Activated CD4-positive, alpha-beta T cell treated with anti-CD3 and anti-CD28 coated beads for 36 hours (primary cell): ENCODE measurements at regions of chr6 and their contacts with region 1.

Region 1: GRCh38 chr6:108052706-108053105 is 21.8 kb downstream of the OSTM1 start:
- DNase-seq: no peak
- ATAC-seq: no peak
- H3K4me3 Mint-ChIP-seq: no peak overlapping the region
- H3K27ac Mint-ChIP-seq: no peak overlapping the region
- H3K4me1 Mint-ChIP-seq: no peaks in the 10 kb centered on the region
- H3K27me3 Mint-ChIP-seq: no peaks in the 10 kb centered on the region

Region 2: GRCh38 chr6:107132330-107132954 is 920.3 kb before region 1 on chr6:
- CTCF ChIA-PET with region 1: no interaction called
- POLR2A ChIA-PET with region 1: no interaction called
- intact Hi-C with region 1: loop called in 1 of 2 experiments (anchors 2 kb)
- DNase-seq: peak; percentile 50
- ATAC-seq: no peak
- H3K4me3 Mint-ChIP-seq: no peak overlapping the region
- H3K27ac Mint-ChIP-seq: no peak overlapping the region
- H3K4me1 Mint-ChIP-seq: no peaks in the 10 kb centered on the region
- H3K27me3 Mint-ChIP-seq: no peaks in the 10 kb centered on the region

Region 3: DNA sequence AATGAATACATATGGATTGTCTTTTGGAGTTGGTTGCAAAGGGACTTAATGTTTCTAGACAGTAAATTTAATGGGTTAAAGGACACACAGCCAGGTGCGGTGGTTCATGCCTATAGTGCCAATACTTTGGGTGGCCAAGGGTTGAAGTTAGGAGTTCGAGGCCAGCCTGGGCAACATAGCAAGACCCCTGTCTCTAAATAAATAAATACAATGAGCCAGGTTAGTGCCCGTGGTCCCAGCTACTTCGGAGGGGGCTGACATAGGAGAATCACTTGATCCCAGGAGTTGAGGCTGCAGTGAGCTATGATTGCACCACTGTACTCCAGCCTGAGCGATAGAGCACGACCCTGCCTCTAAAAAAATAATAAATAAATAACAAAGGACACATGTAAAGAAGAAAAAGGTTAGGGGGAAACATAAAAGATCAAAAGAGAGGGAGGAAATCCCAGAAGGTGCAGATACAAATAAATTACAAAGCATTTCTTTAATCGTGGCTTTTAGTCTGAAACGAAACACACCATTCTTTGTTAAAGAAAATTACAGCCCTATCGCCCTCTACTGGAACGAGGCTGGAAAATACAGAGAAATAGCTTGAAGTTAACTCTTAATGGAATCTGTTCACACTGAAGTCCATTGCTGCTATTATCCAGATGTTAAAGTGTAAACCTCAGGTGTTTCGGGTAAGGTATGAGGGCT is 186.0 kb before region 1 on chr6:
- CTCF ChIA-PET with region 1: interaction called, 5 read pairs
- POLR2A ChIA-PET with region 1: no interaction called
- intact Hi-C with region 1: loop called (anchors 2 to 5 kb)
- DNase-seq: peak; percentile 38
- ATAC-seq: peak; percentile 43
- H3K4me3 Mint-ChIP-seq: no peak overlapping the region
- H3K27ac Mint-ChIP-seq: no peak overlapping the region
- H3K4me1 Mint-ChIP-seq: peaks cover 30% of the 10 kb centered on the region
- H3K27me3 Mint-ChIP-seq: no peaks in the 10 kb centered on the region

Region 4: GRCh38 chr6:107982486-107982885 is 70.2 kb before region 1 on chr6:
- CTCF ChIA-PET with region 1: interaction called, 7 read pairs
- POLR2A ChIA-PET with region 1: no interaction called
- intact Hi-C with region 1: loop called (anchors 1 to 5 kb)
- DNase-seq: no peak
- ATAC-seq: no peak
- H3K4me3 Mint-ChIP-seq: no peak overlapping the region
- H3K27ac Mint-ChIP-seq: no peak overlapping the region
- H3K4me1 Mint-ChIP-seq: no peaks in the 10 kb centered on the region
- H3K27me3 Mint-ChIP-seq: no peaks in the 10 kb centered on the region

Region 5: DNA sequence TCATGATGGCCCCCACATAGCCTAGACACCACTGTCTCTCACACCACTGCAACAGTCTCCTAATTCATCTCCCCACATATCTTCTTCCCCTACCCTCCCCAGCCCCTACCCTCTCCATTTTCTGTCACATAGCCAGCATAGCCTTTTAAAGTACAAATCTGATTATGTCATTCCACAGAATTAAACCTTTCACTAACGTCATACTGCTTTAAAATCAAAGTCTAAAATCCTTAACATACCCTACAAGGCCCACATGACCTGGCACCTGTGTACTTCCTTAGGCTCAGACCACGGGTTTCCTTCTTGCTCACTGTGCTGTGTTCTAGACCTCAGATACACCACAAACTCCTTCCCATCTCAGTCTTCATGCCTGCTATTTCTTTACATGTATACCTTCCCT is 15.9 kb after region 1 on chr6:
- CTCF ChIA-PET with region 1: interaction called, 11 read pairs
- POLR2A ChIA-PET with region 1: no interaction called
- intact Hi-C with region 1: no loop called
- DNase-seq: peak; percentile 68
- ATAC-seq: peak; percentile 95
- H3K4me3 Mint-ChIP-seq: no peak overlapping the region
- H3K27ac Mint-ChIP-seq: no peak overlapping the region
- H3K4me1 Mint-ChIP-seq: peaks cover 12% of the 10 kb centered on the region
- H3K27me3 Mint-ChIP-seq: no peaks in the 10 kb centered on the region

Region 6: GRCh38 chr6:108133594-108134179 is 81.0 kb after region 1 on chr6:
- CTCF ChIA-PET with region 1: no interaction called
- POLR2A ChIA-PET with region 1: no interaction called
- intact Hi-C with region 1: no loop called
- DNase-seq: peak; percentile 73
- ATAC-seq: peak; percentile 90
- H3K4me3 Mint-ChIP-seq: peak overlapping the region; percentile 64
- H3K27ac Mint-ChIP-seq: peak overlapping the region; percentile 88
- H3K4me1 Mint-ChIP-seq: peaks cover 9% of the 10 kb centered on the region
- H3K27me3 Mint-ChIP-seq: peaks cover 63% of the 10 kb centered on the region